Sigmoid colon (tissue), 7 donors: ENCODE measurements at regions of chr10 and their contacts with region 1.

Region 1: DNA sequence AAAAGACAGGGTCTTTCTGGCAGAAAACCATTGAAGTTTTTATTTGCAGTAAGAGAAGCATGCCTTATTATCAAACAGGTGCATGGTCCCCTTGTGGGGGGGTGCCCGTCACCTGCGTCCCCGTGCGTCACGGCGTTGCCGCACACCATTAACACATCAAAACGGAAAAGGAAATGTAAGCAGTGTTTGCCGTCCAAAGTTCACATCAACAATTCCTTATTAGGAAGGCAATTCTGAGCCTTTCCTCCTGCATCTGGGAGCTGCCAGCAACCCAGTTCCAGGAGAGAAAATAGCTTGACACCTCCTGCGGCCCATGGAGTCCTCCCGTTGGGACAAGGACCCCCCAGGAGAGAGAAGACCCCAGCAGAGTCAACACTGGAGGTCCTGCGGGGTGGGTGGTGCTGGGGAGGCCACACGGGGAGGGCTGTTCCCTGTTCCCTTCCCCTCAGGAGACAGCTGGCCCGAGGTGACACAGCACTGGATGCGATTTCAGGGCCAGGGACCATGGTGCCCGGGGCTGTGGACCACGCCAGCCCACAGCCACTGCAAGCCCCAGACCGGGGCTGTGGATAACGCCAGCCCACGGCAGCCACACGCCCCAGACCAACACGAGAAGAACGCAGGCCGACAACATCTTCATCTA is 39.5 kb downstream of the DIP2C start:
- DNase-seq: peak; percentile 92
- H3K4me3 ChIP-seq: peak overlapping the region; percentile 39 to 52 (median 45)
- H3K27ac ChIP-seq: peak overlapping the region; percentile 80 to 96 (median 89)
- H3K4me1 ChIP-seq: peaks cover 0 to 62% (median 53%) of the 10 kb centered on the region in 4 donors
- H3K27me3 ChIP-seq: no peaks in the 10 kb centered on the region
- CTCF ChIP-seq: no peak
- EP300 ChIP-seq: peak; percentile 95 to 99 (median 99)
- POLR2A ChIP-seq: peak; percentile 60 to 74

Region 2: DNA sequence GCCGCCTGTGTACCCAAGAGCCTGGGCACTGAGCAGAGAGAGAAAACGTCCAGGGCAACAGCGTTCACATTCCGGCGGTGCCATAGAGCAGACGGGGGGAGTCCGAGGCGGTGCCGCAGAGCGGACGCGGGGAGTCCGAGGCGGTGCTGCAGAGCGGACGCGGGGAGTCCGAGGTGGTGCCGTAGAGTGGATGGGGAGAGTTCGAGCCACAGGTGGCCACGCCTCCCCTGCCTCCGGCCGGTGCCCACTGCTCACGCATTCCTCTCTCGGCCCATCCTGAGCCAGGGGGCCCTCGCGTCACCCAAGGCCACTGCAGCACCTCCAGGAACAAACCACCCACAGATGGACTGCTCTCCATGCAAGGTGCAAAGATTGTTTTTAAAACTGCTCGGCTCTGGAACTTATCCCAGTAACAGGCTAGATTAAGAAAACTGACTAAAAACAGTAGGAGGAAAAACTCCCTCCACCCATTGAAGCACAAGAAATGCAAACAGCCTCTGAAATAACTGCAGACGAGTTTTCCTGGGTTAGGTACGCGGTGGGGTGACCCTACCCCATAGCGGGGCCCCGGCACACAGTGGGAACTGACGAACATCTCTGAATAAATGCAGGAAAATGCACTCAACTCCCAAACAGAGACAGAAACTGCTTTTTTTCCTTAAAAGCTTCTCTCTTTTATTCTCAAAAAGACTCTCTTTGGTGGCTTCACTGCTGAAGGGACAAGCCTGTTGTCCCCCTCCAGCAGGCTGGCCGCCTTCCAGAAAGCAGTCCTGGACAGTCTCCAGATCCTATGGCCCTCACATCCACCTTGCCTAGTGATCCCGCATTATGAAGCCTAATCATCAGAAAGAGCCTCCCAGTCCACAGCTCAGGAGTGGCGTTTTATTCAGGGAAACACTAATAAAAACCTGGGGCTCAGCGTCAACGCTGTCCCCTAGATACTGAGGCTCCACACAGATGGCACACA is 16.4 kb before region 1 on chr10:
- intact Hi-C with region 1: loop called (anchors 1 kb)
- DNase-seq: peak; percentile 82
- H3K4me3 ChIP-seq: peak overlapping the region in 3 of 4 donors; percentile 13 to 30 (median 23)
- H3K27ac ChIP-seq: peak overlapping the region; percentile 75 to 90 (median 84)
- H3K4me1 ChIP-seq: peaks cover 0 to 56% (median 44%) of the 10 kb centered on the region in 4 donors
- H3K27me3 ChIP-seq: no peaks in the 10 kb centered on the region
- CTCF ChIP-seq: no peak
- EP300 ChIP-seq: no peak
- POLR2A ChIP-seq: no peak